ENCODE measurements at regions of chr17 and their contacts with region 1.

Region 1: DNA sequence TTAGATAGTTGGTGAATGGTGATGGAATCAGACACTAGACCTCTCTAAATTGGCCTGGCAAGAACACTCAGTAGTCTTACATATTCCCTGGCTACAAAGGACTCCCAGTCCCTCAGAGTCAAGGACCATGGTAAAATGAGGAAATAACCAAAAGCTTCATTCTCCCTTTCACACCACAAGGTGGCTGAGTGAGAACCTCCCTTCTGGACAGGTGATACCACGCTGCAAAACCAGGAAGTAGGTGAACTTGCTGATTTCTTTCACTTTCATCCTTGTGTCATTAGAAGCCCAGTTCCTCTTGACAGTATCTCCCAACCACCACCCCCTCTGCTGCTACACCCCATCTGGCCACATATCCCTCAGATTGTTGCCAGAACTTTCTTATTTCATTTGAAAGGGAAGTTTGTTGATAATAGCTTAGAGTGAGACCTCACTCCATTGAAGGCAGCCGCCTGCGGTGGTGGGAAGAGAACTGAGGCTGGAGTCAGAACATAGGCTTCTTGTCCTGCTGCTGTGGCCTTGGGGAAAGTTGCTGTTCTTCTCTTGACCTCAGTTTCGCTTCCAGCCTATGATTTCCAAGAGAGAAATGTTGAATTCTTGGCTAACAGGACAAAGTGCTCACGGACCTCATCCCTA is 290.6 kb upstream of the CCL2 start:
- DNase-seq: no peak
- H3K4me3 ChIP-seq: no peak overlapping the region
- H3K27ac ChIP-seq: no peak overlapping the region
- H3K4me1 ChIP-seq: no peaks in the 10 kb centered on the region
- H3K27me3 ChIP-seq: no peaks in the 10 kb centered on the region
- CTCF ChIP-seq: no peak

Region 2: GRCh38 chr17:33892717-33893591 is 71.5 kb before region 1 on chr17:
- CTCF ChIA-PET with region 1: no interaction called
- dilution Hi-C with region 1: no loop called
- in situ Hi-C with region 1: no loop called
- intact Hi-C with region 1: no loop called
- DNase-seq: no peak
- H3K4me3 ChIP-seq: no peak overlapping the region
- H3K27ac ChIP-seq: no peak overlapping the region
- H3K4me1 ChIP-seq: no peaks in the 10 kb centered on the region
- H3K27me3 ChIP-seq: no peaks in the 10 kb centered on the region
- CTCF ChIP-seq: no peak

Region 3: GRCh38 chr17:33933576-33933975 is 30.9 kb before region 1 on chr17:
- CTCF ChIA-PET with region 1: no interaction called
- dilution Hi-C with region 1: loop called (anchors 5 kb)
- in situ Hi-C with region 1: no loop called
- intact Hi-C with region 1: no loop called
- DNase-seq: no peak
- H3K4me3 ChIP-seq: no peak overlapping the region
- H3K27ac ChIP-seq: no peak overlapping the region
- H3K4me1 ChIP-seq: no peaks in the 10 kb centered on the region
- H3K27me3 ChIP-seq: no peaks in the 10 kb centered on the region
- CTCF ChIP-seq: no peak

Region 4: GRCh38 chr17:33978889-33979288 is 14.4 kb after region 1 on chr17:
- CTCF ChIA-PET with region 1: no interaction called
- dilution Hi-C with region 1: no loop called
- in situ Hi-C with region 1: no loop called
- intact Hi-C with region 1: loop called (anchors 1 kb)
- DNase-seq: no peak
- H3K4me3 ChIP-seq: no peak overlapping the region
- H3K27ac ChIP-seq: no peak overlapping the region
- H3K4me1 ChIP-seq: no peaks in the 10 kb centered on the region
- H3K27me3 ChIP-seq: no peaks in the 10 kb centered on the region
- CTCF ChIP-seq: no peak

Region 5: DNA sequence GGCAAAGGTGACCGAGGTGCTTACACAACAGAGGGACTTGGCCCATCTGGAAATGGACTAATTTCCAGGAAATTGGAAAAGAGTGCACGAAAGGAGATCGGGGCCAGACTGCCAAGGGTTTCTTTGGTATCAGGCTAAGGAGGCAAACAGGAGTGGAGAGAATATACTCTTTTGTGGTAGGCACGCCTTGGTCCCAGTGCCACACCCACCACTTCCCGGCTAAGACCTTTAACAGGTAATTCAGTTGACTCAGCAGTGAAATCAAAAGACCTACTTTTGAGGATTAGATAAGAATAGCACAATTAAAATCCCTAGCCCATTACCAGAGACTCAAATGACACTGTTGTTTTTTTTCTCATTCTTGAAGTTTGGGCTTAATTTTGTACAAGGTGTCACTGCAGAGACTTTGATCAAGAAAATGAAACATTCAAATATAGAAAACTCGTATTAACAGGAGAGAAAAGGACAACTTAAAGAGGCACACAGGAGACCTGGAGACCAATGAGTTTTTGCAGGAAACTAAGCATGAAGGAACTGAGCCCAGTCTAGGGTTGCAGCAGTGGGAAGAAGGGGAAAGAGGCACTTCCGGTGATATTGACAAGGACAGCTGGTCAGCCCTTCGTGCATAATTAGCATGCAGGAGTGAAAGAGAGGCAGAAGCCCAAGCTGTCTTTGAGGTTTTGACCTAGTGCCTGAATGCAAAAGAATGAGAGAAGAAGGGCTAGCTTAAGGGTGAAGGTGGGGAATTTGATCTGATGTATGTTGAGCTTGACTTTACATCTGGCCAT is 25.1 kb after region 1 on chr17:
- CTCF ChIA-PET with region 1: no interaction called
- dilution Hi-C with region 1: no loop called
- in situ Hi-C with region 1: no loop called
- intact Hi-C with region 1: no loop called
- DNase-seq: no peak
- H3K4me3 ChIP-seq: no peak overlapping the region
- H3K27ac ChIP-seq: no peak overlapping the region
- H3K4me1 ChIP-seq: no peaks in the 10 kb centered on the region
- H3K27me3 ChIP-seq: no peaks in the 10 kb centered on the region
- CTCF ChIP-seq: no peak

Region 6: DNA sequence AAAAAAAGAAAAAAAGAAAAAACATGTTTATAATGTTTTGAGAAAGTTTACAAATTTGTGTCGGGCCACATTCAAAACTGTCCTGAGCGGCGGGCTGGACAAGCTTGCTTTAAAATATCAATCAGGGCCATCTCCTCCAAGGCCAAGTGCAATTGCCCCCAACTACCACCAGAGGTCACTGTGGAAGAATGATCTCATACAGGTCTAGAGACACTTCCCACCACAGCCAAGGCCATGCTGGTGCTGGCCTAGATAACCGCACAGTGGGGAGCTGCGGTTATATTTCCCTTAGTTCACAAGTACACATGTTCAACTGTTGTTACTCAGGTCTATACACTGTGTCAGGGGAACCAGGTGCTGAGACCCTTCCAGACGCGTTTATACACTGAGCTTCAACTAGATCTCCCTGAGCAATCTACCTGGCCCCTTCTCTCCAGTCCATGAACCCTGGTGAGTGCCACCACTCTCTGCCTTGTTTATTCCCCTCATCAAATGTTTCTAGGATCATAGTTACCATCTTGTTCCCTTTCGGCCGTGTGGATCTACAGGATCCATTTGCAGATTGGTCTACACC is 206.9 kb after region 1 on chr17:
- CTCF ChIA-PET with region 1: no interaction called
- dilution Hi-C with region 1: no loop called
- in situ Hi-C with region 1: no loop called
- intact Hi-C with region 1: no loop called
- DNase-seq: peak; percentile 19
- H3K4me3 ChIP-seq: no peak overlapping the region
- H3K27ac ChIP-seq: no peak overlapping the region
- H3K4me1 ChIP-seq: no peaks in the 10 kb centered on the region
- H3K27me3 ChIP-seq: no peaks in the 10 kb centered on the region
- CTCF ChIP-seq: peak; percentile 70 to 75

Measured in mammary epithelial cell (primary cell).